Left cardiac atrium (tissue), 4 donors: ENCODE measurements at regions of chr22 and their contacts with region 1.

Region 1: GRCh38 chr22:49789289-49790141 is 38.2 kb downstream of the BRD1 start:
- DNase-seq: peak; percentile 59
- ATAC-seq: peak; percentile 52 to 55

Region 2: GRCh38 chr22:49712195-49712791 is 77.2 kb before region 1 on chr22:
- intact Hi-C with region 1: no loop called
- DNase-seq: no peak
- ATAC-seq: no peak

Region 3: DNA sequence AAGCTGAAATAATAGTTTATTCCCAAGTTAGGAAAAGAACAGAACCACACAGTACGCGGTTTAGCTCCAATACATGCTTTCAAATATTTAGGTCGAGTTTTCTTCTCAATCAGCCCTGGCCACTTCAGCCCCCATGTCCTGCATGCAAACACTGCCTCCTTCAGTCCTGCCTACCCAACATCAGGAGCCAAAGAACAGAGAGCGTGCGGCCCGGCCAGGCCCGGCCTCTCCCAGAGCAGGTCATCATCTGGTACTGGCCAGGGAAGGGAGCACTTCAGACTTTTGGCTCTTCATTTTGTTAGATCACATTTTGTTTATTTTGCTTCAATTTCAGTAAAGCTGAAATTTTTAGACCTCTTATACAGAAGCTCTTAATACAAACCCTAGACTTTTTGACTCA is 31.5 kb after region 1 on chr22:
- intact Hi-C with region 1: no loop called
- DNase-seq: no peak
- ATAC-seq: peak in 1 of 2 donors; percentile 53

Region 4: GRCh38 chr22:49838771-49839717 is 49.5 kb after region 1 on chr22:
- intact Hi-C with region 1: loop called in 1 of 2 experiments (anchors 10 kb)
- DNase-seq: no peak
- ATAC-seq: peak; percentile 80 to 87

Region 5: GRCh38 chr22:49917974-49918910 is 128.7 kb after region 1 on chr22 and contains the starts of genes ALG12 and CRELD2:
- intact Hi-C with region 1: loop called in 1 of 2 experiments (anchors 10 kb)
- DNase-seq: peak; percentile 99
- ATAC-seq: peak; percentile 98 to 99
- total RNA-seq, gene ALG12: 15.3 to 15.9 TPM
- total RNA-seq, gene CRELD2: 30.1 to 43.7 TPM

Region 6: DNA sequence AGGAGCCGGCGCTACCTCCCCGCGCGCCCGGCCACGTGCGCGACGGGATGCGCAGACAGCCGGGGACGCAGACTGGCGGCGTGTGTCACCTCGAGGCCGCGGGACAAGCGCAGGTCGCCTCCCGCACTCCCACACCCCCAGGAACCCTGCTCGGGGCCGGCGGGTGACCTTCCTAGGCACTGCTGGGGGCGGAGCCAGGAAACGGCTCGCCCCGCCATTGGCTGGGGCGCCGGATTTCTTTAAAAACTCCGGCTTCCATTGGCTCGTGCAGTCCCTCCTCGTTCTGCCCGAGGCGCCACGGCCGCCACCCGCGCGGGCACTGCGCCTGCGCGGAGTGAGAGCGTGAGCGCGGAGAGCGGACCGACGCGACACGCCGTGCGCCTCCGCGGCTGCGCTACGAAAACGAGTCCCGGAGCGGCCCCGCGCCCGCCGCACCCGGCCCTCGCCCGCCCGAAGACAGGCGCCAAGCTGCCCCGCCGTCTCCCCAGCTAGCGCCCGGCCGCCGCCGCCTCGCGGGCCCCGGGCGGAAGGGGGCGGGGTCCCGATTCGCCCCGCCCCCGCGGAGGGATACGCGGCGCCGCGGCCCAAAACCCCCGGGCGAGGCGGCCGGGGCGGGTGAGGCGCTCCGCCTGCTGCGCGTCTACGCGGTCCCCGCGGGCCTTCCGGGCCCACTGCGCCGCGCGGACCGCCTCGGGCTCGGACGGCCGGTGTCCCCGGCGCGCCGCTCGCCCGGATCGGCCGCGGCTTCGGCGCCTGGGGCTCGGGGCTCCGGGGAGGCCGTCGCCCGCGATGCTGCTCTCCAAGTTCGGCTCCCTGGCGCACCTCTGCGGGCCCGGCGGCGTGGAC is 170.9 kb after region 1 on chr22 and contains the start of gene PIM3:
- intact Hi-C with region 1: no loop called
- DNase-seq: peak; percentile 94
- ATAC-seq: peak; percentile 81 to 84
- total RNA-seq, gene PIM3: 44.1 to 66.8 TPM